Mammary epithelial cell (primary cell): ENCODE measurements at regions of chr17 and their contacts with region 1.

Region 1: GRCh38 chr17:64106918-64107317 is 23.0 kb downstream of the ERN1 start:
- DNase-seq: no peak
- H3K4me3 ChIP-seq: no peak overlapping the region
- H3K27ac ChIP-seq: no peak overlapping the region
- H3K4me1 ChIP-seq: peaks cover 31% of the 10 kb centered on the region
- H3K27me3 ChIP-seq: no peaks in the 10 kb centered on the region
- CTCF ChIP-seq: no peak

Region 2: GRCh38 chr17:63848834-63849700 is 257.9 kb before region 1 on chr17:
- CTCF ChIA-PET with region 1: no interaction called
- dilution Hi-C with region 1: no loop called
- in situ Hi-C with region 1: no loop called
- intact Hi-C with region 1: no loop called
- DNase-seq: peak; percentile 88
- H3K4me3 ChIP-seq: peak overlapping the region in 2 of 3 experiments; percentile 30 to 36
- H3K27ac ChIP-seq: peak overlapping the region; percentile 70
- H3K4me1 ChIP-seq: no peaks in the 10 kb centered on the region
- H3K27me3 ChIP-seq: no peaks in the 10 kb centered on the region
- CTCF ChIP-seq: peak; percentile 42 to 71

Region 3: GRCh38 chr17:64095144-64095882 is 11.6 kb before region 1 on chr17:
- CTCF ChIA-PET with region 1: no interaction called
- dilution Hi-C with region 1: no loop called
- in situ Hi-C with region 1: no loop called
- intact Hi-C with region 1: loop called (anchors 1 kb)
- DNase-seq: peak; percentile 90
- H3K4me3 ChIP-seq: no peak overlapping the region
- H3K27ac ChIP-seq: peak overlapping the region; percentile 23
- H3K4me1 ChIP-seq: peaks cover 39% of the 10 kb centered on the region
- H3K27me3 ChIP-seq: no peaks in the 10 kb centered on the region
- CTCF ChIP-seq: no peak

Region 4: GRCh38 chr17:64117981-64118979 is 11.4 kb after region 1 on chr17:
- CTCF ChIA-PET with region 1: no interaction called
- dilution Hi-C with region 1: no loop called
- in situ Hi-C with region 1: no loop called
- intact Hi-C with region 1: loop called (anchors 1 kb)
- DNase-seq: no peak
- H3K4me3 ChIP-seq: no peak overlapping the region
- H3K27ac ChIP-seq: no peak overlapping the region
- H3K4me1 ChIP-seq: peaks cover 24% of the 10 kb centered on the region
- H3K27me3 ChIP-seq: no peaks in the 10 kb centered on the region
- CTCF ChIP-seq: no peak